Heart right ventricle (tissue), 16 donors: ENCODE measurements at regions of chr9 and their contacts with region 1.

Region 1: DNA sequence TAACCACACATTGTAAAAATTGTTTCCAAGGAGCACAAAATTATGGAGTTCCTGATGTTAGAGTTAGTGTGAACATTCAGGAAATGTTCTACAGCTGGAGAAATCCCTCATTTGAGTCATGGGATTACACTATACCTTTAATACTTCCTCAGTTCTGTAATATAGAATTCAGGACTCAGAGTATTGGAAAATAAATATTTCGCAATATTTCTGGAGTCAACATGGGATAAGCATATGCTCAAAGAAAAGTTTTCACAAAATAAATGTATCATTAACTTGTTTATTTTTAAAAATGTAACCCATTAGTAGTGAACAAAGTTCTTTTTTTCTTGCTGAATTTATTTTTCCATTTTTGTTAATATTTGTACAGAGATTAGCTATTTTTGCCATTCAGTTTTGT is 8.6 kb downstream of the CYLC2 start:
- DNase-seq: no peak
- ATAC-seq: no peak
- H3K4me3 ChIP-seq: no peak overlapping the region
- H3K27ac ChIP-seq: no peak overlapping the region
- H3K4me1 ChIP-seq: no peaks in the 10 kb centered on the region
- H3K27me3 ChIP-seq: no peaks in the 10 kb centered on the region
- CTCF ChIP-seq: no peak

Region 2: GRCh38 chr9:101586651-101587050 is 1417.0 kb before region 1 on chr9:
- intact Hi-C with region 1: no loop called
- DNase-seq: no peak
- ATAC-seq: no peak
- H3K4me3 ChIP-seq: no peak overlapping the region
- H3K27ac ChIP-seq: peak overlapping the region in 1 of 10 donors; percentile 77
- H3K4me1 ChIP-seq: peaks cover 0 to 13% (median 0%) of the 10 kb centered on the region in 9 donors
- H3K27me3 ChIP-seq: peaks cover 0 to 3% (median 0%) of the 10 kb centered on the region in 7 donors
- CTCF ChIP-seq: no peak

Region 3: DNA sequence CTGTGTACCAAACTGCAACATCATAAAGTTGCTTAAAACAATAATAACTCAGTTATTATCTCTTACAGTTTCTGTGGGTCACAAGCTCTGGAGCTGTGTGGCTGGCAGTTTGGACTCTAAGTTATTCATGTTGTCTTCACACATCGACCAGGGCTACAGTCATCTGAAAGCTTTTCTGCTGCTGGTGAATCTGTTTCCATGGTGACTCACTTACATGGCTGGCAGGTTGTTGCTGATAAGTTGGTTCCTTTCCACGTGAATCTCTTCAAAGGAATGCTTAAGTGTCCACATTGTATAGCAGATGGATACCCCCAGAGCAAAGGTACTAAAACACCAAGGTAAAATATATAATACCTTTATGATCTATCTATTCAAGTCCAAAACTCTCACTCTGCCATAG is 53.3 kb before region 1 on chr9:
- intact Hi-C with region 1: no loop called
- DNase-seq: no peak
- ATAC-seq: no peak
- H3K4me3 ChIP-seq: no peak overlapping the region
- H3K27ac ChIP-seq: no peak overlapping the region
- H3K4me1 ChIP-seq: no peaks in the 10 kb centered on the region
- H3K27me3 ChIP-seq: no peaks in the 10 kb centered on the region
- CTCF ChIP-seq: no peak

Region 4: DNA sequence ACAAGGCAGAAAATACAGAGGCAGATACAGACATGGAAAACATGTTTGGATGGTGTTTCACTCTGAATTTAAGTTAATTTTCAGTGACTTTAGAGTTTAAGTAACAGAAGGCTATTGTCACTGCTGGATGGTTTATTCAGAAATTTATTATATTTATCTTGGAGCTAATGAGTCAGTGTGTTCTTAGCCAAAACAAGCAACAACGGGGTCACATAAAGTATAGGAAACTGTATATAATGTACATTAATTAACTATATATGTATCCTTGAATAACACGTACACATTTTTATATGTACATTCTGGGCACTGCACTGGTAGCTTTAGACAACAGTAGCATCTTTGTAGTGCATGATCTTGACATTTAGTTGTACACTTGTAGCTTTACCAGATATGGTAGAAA is 22.1 kb after region 1 on chr9:
- intact Hi-C with region 1: loop called in 1 of 10 experiments (anchors 2 kb)
- DNase-seq: no peak
- ATAC-seq: no peak
- H3K4me3 ChIP-seq: no peak overlapping the region
- H3K27ac ChIP-seq: no peak overlapping the region
- H3K4me1 ChIP-seq: no peaks in the 10 kb centered on the region
- H3K27me3 ChIP-seq: no peaks in the 10 kb centered on the region
- CTCF ChIP-seq: no peak